ENCODE measurements at regions of chr4 and their contacts with region 1.

Region 1: GRCh38 chr4:25953740-25954139 is 39.7 kb downstream of the SMIM20 start:
- DNase-seq: peak; percentile 50
- H3K4me3 Mint-ChIP-seq: no peak overlapping the region
- H3K27ac Mint-ChIP-seq: no peak overlapping the region
- H3K4me1 Mint-ChIP-seq: peaks cover 7% of the 10 kb centered on the region
- H3K27me3 Mint-ChIP-seq: peaks cover 4% of the 10 kb centered on the region
- CTCF ChIP-seq: no peak

Region 2: DNA sequence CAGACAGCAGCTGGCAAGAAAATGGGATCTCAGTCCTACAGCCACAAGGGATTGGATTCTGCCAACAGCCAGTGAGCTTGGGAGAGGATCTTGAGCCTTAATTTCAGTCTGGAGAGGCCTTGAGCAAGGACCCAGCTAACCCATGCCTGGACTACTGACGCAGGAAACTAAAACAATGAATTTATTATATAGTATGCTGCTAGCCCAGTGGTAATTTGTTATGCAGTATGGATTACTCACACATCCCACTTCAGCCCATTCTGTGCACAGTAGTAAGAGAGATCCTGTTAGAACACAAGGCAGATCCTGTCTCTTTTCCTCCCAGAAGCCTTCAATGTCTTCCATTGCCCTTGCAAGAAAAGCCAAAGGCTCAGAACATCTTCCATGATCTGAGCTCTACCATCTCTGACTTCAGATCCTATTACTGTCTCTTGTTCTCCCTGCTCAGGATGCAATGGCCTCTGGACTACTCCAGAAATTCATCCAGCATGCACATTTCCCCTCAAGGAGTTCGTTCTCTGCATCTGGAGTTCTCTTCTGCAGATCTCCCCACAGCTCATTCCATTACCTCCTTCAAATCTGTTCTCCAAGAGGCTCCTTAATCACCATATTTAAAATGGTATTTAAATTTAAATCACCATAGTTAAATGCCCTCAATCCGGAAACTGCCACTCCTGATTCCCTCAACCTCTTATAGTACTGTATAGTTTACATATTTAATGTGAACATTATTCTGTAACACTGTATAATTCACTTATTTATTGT is 12.1 kb before region 1 on chr4:
- CTCF ChIA-PET with region 1: interaction called, 11 read pairs
- POLR2A ChIA-PET with region 1: interaction called, 3 read pairs
- intact Hi-C with region 1: no loop called
- DNase-seq: no peak
- H3K4me3 Mint-ChIP-seq: no peak overlapping the region
- H3K27ac Mint-ChIP-seq: no peak overlapping the region
- H3K4me1 Mint-ChIP-seq: no peaks in the 10 kb centered on the region
- H3K27me3 Mint-ChIP-seq: peaks cover 8% of the 10 kb centered on the region
- CTCF ChIP-seq: no peak

Region 3: GRCh38 chr4:26183017-26183416 is 229.3 kb after region 1 on chr4:
- CTCF ChIA-PET with region 1: no interaction called
- POLR2A ChIA-PET with region 1: no interaction called
- intact Hi-C with region 1: no loop called
- DNase-seq: no peak
- H3K4me3 Mint-ChIP-seq: no peak overlapping the region
- H3K27ac Mint-ChIP-seq: no peak overlapping the region
- H3K4me1 Mint-ChIP-seq: no peaks in the 10 kb centered on the region
- H3K27me3 Mint-ChIP-seq: no peaks in the 10 kb centered on the region
- CTCF ChIP-seq: no peak

Measured in MCF 10A (cell line).